ENCODE measurements at regions of chr1 and their contacts with region 1.

Region 1: DNA sequence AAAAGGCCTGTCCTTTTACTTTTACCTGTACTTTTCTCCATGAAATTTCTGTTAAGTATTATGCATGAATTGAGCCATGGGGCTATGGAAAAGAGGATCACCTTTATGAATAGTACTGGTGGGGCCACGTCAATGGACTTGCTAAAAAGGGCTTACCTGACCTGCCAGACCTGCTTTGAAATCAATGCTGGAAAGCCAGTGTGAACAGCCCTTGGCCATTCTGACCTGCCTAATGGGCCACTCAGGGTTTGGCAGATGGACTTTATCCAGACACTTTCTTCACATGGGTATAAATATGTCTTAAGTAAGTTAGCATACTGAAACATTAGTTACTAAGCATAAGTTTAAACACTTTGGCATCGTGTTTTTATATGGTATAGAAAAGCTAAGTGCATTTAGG is 8.3 kb upstream of the GUK1 start:
- DNase-seq: no peak
- ATAC-seq: no peak
- H3K4me3 Mint-ChIP-seq: no peak overlapping the region
- H3K27ac Mint-ChIP-seq: no peak overlapping the region
- H3K4me1 Mint-ChIP-seq: peaks cover 9% of the 10 kb centered on the region
- H3K27me3 Mint-ChIP-seq: peaks cover 6% of the 10 kb centered on the region
- CTCF ChIP-seq: no peak

Region 2: DNA sequence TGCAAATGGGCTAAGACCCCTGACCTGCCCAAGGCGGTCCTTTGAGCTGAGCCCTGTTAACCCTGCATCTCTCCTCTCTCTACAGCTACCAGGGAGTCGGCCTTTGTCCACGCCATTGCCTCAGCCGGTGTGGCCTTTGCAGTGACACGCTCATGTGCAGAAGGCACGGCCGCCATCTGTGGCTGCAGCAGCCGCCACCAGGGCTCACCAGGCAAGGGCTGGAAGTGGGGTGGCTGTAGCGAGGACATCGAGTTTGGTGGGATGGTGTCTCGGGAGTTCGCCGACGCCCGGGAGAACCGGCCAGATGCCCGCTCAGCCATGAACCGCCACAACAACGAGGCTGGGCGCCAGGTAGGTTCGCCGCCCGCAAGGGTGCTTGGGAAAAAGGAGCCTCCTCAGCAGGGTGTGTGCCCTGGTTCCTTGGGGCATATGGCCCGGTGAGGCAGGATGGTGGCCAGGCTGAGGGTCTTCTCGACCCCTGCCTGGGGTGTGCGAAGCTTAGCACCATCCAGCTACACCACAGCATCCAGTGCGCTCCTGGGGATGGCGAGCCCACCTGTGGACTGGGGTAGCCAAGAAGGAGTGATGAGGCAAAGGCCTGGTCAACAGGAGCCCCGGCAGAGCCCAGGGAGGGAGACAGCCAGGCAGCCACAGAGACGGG is 81.1 kb before region 1 on chr1:
- CTCF ChIA-PET with region 1: no interaction called
- POLR2A ChIA-PET with region 1: no interaction called
- intact Hi-C with region 1: no loop called
- DNase-seq: no peak
- ATAC-seq: no peak
- H3K4me3 Mint-ChIP-seq: no peak overlapping the region
- H3K27ac Mint-ChIP-seq: no peak overlapping the region
- H3K4me1 Mint-ChIP-seq: no peaks in the 10 kb centered on the region
- H3K27me3 Mint-ChIP-seq: peaks cover 20% of the 10 kb centered on the region
- CTCF ChIP-seq: no peak

Region 3: GRCh38 chr1:228109073-228109961 is 22.4 kb before region 1 on chr1 and contains the start of gene MRPL55:
- CTCF ChIA-PET with region 1: interaction called, 15 read pairs
- POLR2A ChIA-PET with region 1: no interaction called
- intact Hi-C with region 1: no loop called
- DNase-seq: peak; percentile 99
- ATAC-seq: peak; percentile 93
- H3K4me3 Mint-ChIP-seq: peak within 1 kb of the TSS; percentile 83
- H3K27ac Mint-ChIP-seq: peak within 1 kb of the TSS; percentile 90
- H3K4me1 Mint-ChIP-seq: peaks cover 31% of the 10 kb centered on the region
- H3K27me3 Mint-ChIP-seq: no peaks in the 10 kb centered on the region
- CTCF ChIP-seq: no peak
- total RNA-seq, gene MRPL55: 67.8 to 68.3 TPM

Region 4: GRCh38 chr1:228120857-228121489 is 10.8 kb before region 1 on chr1:
- CTCF ChIA-PET with region 1: interaction called, 51 read pairs
- POLR2A ChIA-PET with region 1: interaction called, 3 read pairs
- intact Hi-C with region 1: no loop called
- DNase-seq: no peak
- ATAC-seq: peak; percentile 82
- H3K4me3 Mint-ChIP-seq: peak overlapping the region; percentile 63
- H3K27ac Mint-ChIP-seq: peak overlapping the region; percentile 32
- H3K4me1 Mint-ChIP-seq: peaks cover 3% of the 10 kb centered on the region
- H3K27me3 Mint-ChIP-seq: no peaks in the 10 kb centered on the region
- CTCF ChIP-seq: no peak

Region 5: DNA sequence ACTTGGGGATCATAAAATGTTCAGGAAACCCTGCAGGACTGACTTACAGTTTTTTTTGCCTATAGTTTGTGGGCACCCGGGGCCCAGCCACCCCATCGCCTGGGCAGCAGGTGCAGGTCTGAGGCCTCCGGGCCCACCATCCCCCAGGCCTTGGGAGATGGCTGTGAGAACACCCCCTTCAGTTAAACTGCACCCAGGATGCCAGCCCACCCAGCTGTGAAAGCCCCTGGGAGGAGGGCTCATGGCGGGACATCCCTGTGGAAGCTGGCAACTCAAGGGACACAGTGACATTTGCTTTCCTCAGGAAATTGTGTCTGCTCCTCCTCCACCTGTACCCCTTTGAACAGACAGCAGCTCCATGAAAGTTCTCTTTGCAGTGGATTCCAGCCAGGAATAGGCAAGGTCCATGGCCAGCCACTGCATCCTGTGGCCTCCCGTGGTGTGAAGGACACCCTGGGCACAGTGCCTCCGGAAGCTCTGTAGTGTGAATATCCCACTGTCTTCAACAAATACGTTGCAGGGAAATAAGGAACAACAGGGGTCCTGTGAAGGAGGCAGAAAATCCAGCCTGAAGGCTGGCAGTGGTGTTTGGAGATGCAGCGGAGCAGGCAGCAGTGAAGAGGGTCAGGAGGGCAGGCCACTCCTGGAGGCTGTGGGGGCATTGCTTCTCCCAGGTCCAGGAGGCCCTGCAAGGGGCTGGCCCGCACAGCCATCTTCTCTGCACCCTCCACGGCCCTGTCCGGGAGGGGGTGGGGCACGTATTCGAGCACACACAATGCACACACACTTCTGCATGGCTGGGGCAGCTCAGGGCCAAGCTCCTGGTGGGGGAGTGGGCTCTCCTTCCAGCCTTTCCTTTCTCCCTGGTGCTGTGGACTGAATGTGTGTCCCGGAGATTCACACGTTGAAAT is 74.0 kb after region 1 on chr1:
- CTCF ChIA-PET with region 1: no interaction called
- POLR2A ChIA-PET with region 1: no interaction called
- intact Hi-C with region 1: no loop called
- DNase-seq: no peak
- ATAC-seq: no peak
- H3K4me3 Mint-ChIP-seq: no peak overlapping the region
- H3K27ac Mint-ChIP-seq: no peak overlapping the region
- H3K4me1 Mint-ChIP-seq: no peaks in the 10 kb centered on the region
- H3K27me3 Mint-ChIP-seq: peaks cover 5% of the 10 kb centered on the region
- CTCF ChIP-seq: no peak

Region 6: GRCh38 chr1:228515200-228515834 is 383.6 kb after region 1 on chr1:
- CTCF ChIA-PET with region 1: interaction called, 10 read pairs
- POLR2A ChIA-PET with region 1: no interaction called
- intact Hi-C with region 1: no loop called
- DNase-seq: peak; percentile 52
- ATAC-seq: peak; percentile 51
- H3K4me3 Mint-ChIP-seq: no peak overlapping the region
- H3K27ac Mint-ChIP-seq: no peak overlapping the region
- H3K4me1 Mint-ChIP-seq: peaks cover 6% of the 10 kb centered on the region
- H3K27me3 Mint-ChIP-seq: peaks cover 12% of the 10 kb centered on the region
- CTCF ChIP-seq: peak; percentile 83